ENCODE measurements at regions of chr19 and their contacts with region 1.

Region 1: GRCh38 chr19:55385740-55386529 is at the start of gene RPL28:
- DNase-seq: peak; percentile 99
- H3K4me3 Mint-ChIP-seq: peak within 1 kb of the TSS; percentile 100
- H3K27ac Mint-ChIP-seq: peak within 1 kb of the TSS; percentile 97
- H3K4me1 Mint-ChIP-seq: peaks cover 59% of the 10 kb centered on the region
- H3K27me3 Mint-ChIP-seq: no peaks in the 10 kb centered on the region
- total RNA-seq, gene RPL28: 3,327 to 3,354 TPM

Region 2: GRCh38 chr19:55216461-55217198 is 169.3 kb before region 1 on chr19:
- CTCF ChIA-PET with region 1: no interaction called
- intact Hi-C with region 1: loop called (anchors 1 kb)
- DNase-seq: peak; percentile 79
- H3K4me3 Mint-ChIP-seq: peak overlapping the region; percentile 50
- H3K27ac Mint-ChIP-seq: no peak overlapping the region
- H3K4me1 Mint-ChIP-seq: peaks cover 13% of the 10 kb centered on the region
- H3K27me3 Mint-ChIP-seq: peaks cover 22% of the 10 kb centered on the region

Region 3: GRCh38 chr19:55289117-55289796 is 96.7 kb before region 1 on chr19:
- CTCF ChIA-PET with region 1: interaction called, 4 read pairs
- intact Hi-C with region 1: loop called (anchors 2 kb)
- DNase-seq: no peak
- H3K4me3 Mint-ChIP-seq: no peak overlapping the region
- H3K27ac Mint-ChIP-seq: no peak overlapping the region
- H3K4me1 Mint-ChIP-seq: peaks cover 4% of the 10 kb centered on the region
- H3K27me3 Mint-ChIP-seq: no peaks in the 10 kb centered on the region

Region 4: GRCh38 chr19:55339048-55339888 is 46.7 kb before region 1 on chr19 and contains the start of gene KMT5C:
- CTCF ChIA-PET with region 1: interaction called, 5 read pairs
- intact Hi-C with region 1: loop called (anchors 1 kb)
- DNase-seq: peak; percentile 100
- H3K4me3 Mint-ChIP-seq: peak within 1 kb of the TSS; percentile 90
- H3K27ac Mint-ChIP-seq: peak within 1 kb of the TSS; percentile 92
- H3K4me1 Mint-ChIP-seq: peaks cover 12% of the 10 kb centered on the region
- H3K27me3 Mint-ChIP-seq: no peaks in the 10 kb centered on the region
- total RNA-seq, gene KMT5C: 45.9 to 47.1 TPM

Region 5: DNA sequence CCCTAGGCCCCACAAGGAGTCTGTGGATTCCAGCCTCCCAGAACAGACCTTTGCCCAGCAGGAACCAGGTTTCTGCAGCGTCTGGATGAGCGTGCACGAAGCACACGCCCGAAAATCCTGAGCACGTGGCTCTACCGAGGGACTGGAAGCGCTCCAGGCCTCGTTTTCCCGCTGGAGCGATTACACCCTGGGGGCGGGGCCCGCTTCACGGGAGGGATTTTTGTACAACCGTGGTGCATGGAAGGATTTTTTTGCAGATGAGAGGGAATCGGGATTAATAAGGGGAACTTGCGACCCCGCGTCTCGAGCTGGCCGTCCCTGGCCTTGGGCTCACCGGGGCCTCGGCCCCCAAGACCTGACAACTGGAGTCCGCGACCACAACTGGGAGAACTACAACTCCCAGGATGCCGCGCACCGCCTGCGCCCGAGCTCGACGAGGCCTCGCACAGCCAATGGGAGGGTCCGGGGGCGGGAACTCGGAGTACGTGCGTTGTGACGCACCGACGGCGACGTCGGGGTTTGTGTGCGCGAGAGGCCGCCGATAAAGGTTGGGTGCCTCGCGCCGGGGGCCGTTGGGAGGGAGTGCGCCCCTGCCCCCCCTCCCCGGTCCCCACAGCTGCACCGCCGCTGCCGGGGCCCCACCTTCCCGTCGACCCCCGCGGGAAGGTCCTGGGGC is 90.3 kb after region 1 on chr19 and contains the start of gene ZNF628:
- CTCF ChIA-PET with region 1: no interaction called
- intact Hi-C with region 1: loop called (anchors 1 kb)
- DNase-seq: peak; percentile 99
- H3K4me3 Mint-ChIP-seq: peak within 1 kb of the TSS; percentile 90
- H3K27ac Mint-ChIP-seq: peak within 1 kb of the TSS; percentile 90
- H3K4me1 Mint-ChIP-seq: peaks cover 30% of the 10 kb centered on the region
- H3K27me3 Mint-ChIP-seq: no peaks in the 10 kb centered on the region
- total RNA-seq, gene ZNF628: 6.0 to 6.1 TPM

Region 6: DNA sequence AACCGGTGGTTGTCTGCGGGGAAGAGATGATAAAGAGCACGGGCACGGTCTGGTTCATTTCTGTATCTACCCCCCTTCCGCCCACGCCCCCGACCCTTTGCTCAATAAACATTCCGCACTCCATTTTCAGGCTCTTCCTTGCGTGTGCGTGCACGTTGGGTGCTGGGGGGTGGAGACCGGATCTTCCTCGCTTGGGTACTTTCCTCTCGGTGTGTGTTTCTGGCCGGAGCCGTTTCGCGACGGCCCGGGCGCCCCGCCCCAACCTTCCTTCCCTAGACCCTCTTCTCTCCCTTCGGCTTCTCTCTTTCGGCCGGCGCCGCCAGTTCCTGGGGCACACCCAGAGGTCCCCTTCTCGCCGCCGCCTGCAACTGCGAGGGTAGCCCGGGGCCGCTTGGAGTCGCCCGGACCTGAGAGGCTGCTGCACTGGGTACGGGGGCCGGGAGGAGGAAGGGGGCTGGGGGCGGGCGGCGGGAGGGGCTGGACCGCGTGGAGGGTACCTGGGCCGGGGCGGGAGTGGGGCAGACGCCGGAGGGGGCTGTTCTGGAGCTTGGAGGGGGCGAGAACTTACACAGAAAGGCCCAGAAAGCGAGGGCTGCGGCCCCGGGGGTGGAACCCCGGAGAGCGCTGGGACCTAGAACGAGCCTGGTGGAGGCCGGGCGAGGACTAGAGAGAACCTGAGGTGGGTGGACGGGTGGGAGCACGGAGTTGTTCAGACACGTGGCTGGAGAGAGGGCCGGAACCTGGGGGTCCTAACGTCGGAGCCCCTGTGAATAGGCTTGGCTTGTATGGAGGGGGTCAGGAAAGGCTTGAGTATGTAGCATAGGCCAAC is 257.6 kb after region 1 on chr19 and contains the start of gene ZNF581:
- CTCF ChIA-PET with region 1: no interaction called
- intact Hi-C with region 1: loop called (anchors 5 kb)
- DNase-seq: peak; percentile 82
- H3K4me3 Mint-ChIP-seq: peak within 1 kb of the TSS; percentile 93
- H3K27ac Mint-ChIP-seq: peak within 1 kb of the TSS; percentile 96
- H3K4me1 Mint-ChIP-seq: peaks cover 44% of the 10 kb centered on the region
- H3K27me3 Mint-ChIP-seq: no peaks in the 10 kb centered on the region
- total RNA-seq, gene ZNF581: 18.0 to 20.7 TPM

Measured in activated naive CD4-positive, alpha-beta T cell treated with anti-CD3 and anti-CD28 coated beads for 36 hours (primary cell).